MCF 10A (cell line): ENCODE measurements at regions of chr4 and their contacts with region 1.

Region 1: DNA sequence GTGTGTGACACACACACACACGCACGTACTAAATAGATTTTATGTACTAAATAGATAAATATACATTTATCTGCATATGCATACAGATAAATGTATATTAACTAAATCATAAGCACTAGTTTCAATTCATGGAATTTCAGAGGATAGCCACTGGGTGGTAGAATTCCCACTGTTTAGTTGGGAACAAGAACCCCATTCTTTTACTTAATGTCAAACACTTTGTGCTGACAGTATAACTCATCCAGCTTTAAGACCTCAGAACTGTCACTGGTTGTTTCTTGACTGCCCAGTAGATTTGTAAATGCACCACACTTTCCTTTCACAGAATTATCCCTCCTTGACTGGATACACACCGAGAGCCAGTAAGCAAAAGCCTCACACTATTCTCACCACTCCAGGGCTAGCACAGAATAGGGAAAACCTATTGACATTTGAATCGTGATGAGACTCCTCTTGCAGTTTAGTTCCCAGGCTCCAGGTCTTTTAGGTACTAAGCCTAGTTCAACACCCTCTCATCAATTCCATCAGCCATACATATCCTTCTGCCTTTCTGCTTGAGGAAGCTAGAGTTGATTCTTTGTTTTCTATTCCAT is 32.4 kb downstream of the PPARGC1A start:
- DNase-seq: peak; percentile 24
- H3K4me3 Mint-ChIP-seq: no peak overlapping the region
- H3K27ac Mint-ChIP-seq: no peak overlapping the region
- H3K4me1 Mint-ChIP-seq: peaks cover 13% of the 10 kb centered on the region
- H3K27me3 Mint-ChIP-seq: no peaks in the 10 kb centered on the region
- CTCF ChIP-seq: no peak

Region 2: GRCh38 chr4:23279377-23279988 is 578.0 kb before region 1 on chr4:
- CTCF ChIA-PET with region 1: no interaction called
- POLR2A ChIA-PET with region 1: no interaction called
- intact Hi-C with region 1: no loop called
- DNase-seq: peak; percentile 77
- H3K4me3 Mint-ChIP-seq: no peak overlapping the region
- H3K27ac Mint-ChIP-seq: no peak overlapping the region
- H3K4me1 Mint-ChIP-seq: peaks cover 21% of the 10 kb centered on the region
- H3K27me3 Mint-ChIP-seq: no peaks in the 10 kb centered on the region
- CTCF ChIP-seq: no peak

Region 3: GRCh38 chr4:23873717-23874535 is 16.5 kb after region 1 on chr4:
- CTCF ChIA-PET with region 1: interaction called, 11 read pairs
- POLR2A ChIA-PET with region 1: interaction called, 3 read pairs
- intact Hi-C with region 1: no loop called
- DNase-seq: no peak
- H3K4me3 Mint-ChIP-seq: no peak overlapping the region
- H3K27ac Mint-ChIP-seq: no peak overlapping the region
- H3K4me1 Mint-ChIP-seq: peaks cover 5% of the 10 kb centered on the region
- H3K27me3 Mint-ChIP-seq: no peaks in the 10 kb centered on the region
- CTCF ChIP-seq: no peak

Region 4: DNA sequence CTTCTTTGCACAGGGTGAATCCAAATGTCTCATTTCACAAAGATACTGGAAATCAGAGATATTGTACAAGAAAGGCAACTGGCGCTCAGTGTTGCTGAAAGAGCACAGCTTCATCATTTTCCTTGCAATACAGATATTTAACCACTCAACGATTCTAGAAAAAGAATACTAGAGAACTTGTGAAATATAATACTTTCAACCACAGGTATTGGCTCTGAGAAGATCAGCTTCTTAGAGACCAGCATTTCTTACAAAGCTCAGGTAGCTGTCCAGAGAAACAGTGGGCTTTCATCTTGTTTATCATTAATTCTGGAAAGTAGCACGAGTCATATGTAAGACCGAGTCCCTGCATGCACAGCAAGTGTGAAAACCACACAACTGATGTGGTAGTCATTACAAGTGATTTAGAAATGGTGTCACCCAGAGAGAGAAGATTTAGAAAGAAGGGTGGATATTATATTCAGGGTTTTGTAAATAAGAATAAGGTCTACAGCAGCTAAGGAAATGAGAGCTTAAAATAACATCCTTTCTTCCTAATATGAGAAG is 40.2 kb after region 1 on chr4:
- CTCF ChIA-PET with region 1: no interaction called
- POLR2A ChIA-PET with region 1: no interaction called
- intact Hi-C with region 1: no loop called
- DNase-seq: no peak
- H3K4me3 Mint-ChIP-seq: no peak overlapping the region
- H3K27ac Mint-ChIP-seq: no peak overlapping the region
- H3K4me1 Mint-ChIP-seq: no peaks in the 10 kb centered on the region
- H3K27me3 Mint-ChIP-seq: no peaks in the 10 kb centered on the region
- CTCF ChIP-seq: no peak